Activated CD4-positive, alpha-beta T cell treated with anti-CD3 and anti-CD28 coated beads, Interleukin-2, amount 10 ng/mL, durations not matched to agents 24 days and 14 days (primary cell): ENCODE measurements at regions of chr7 and their contacts with region 1.

Region 1: GRCh38 chr7:66844552-66845378 is 76.3 kb upstream of the TMEM248 start:
- DNase-seq: peak; percentile 100
- H3K4me3 Mint-ChIP-seq: peak overlapping the region; percentile 99
- H3K27ac Mint-ChIP-seq: peak overlapping the region; percentile 97
- H3K4me1 Mint-ChIP-seq: peaks cover 22% of the 10 kb centered on the region
- H3K27me3 Mint-ChIP-seq: peaks cover 4% of the 10 kb centered on the region

Region 2: GRCh38 chr7:66413379-66414114 is 431.2 kb before region 1 on chr7:
- intact Hi-C with region 1: loop called (anchors 1 kb)
- DNase-seq: peak; percentile 94
- H3K4me3 Mint-ChIP-seq: peak overlapping the region; percentile 77
- H3K27ac Mint-ChIP-seq: peak overlapping the region; percentile 70
- H3K4me1 Mint-ChIP-seq: peaks cover 15% of the 10 kb centered on the region
- H3K27me3 Mint-ChIP-seq: no peaks in the 10 kb centered on the region

Region 3: DNA sequence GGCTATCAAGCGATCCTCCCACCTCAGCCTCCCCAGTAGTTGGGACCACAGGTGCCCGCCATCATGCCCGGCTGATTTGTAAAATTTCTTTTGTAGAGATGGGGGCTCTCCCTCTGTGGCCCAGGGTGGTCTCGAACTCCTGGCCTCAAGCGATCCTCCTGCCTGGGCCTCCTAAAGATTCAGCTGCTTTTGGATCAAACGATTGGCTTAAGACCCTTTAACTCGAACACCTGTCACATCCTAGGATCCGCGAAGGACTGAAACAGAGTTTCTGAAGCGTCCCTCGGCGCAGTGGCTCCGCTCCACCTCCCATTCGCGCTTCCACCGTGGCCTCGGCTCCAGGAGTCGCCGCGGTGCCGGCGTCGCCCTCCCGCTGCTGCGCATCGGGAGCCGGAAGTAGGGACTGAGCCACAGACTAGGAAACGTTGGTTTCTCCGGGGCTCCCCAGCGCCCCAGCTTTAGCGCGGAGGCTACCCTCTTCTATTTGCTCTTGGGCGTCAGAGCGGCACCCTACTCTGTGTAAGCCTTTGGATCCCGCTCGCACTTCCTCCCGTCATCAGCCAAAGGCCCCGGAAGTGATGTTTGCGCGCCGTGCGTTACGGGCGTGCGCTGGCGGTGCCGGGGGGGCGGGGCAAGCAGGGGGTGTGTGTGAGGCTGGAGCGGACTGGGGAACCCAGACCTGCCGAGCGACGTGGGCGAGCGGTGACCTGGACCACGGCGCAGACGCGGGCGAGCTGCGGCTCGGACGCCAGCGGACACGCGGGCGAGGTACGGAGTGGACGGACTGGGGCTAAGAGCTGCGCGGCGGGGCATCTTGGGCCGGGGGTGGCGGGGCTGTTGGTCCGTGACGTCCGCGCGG is 163.0 kb before region 1 on chr7:
- intact Hi-C with region 1: loop called (anchors 2 kb)
- DNase-seq: peak; percentile 99
- H3K4me3 Mint-ChIP-seq: peak overlapping the region; percentile 93
- H3K27ac Mint-ChIP-seq: peak overlapping the region; percentile 92
- H3K4me1 Mint-ChIP-seq: peaks cover 19% of the 10 kb centered on the region
- H3K27me3 Mint-ChIP-seq: no peaks in the 10 kb centered on the region

Region 4: GRCh38 chr7:66758950-66759628 is 85.7 kb before region 1 on chr7:
- intact Hi-C with region 1: no loop called
- DNase-seq: no peak
- H3K4me3 Mint-ChIP-seq: no peak overlapping the region
- H3K27ac Mint-ChIP-seq: peak overlapping the region; percentile 74
- H3K4me1 Mint-ChIP-seq: peaks cover 20% of the 10 kb centered on the region
- H3K27me3 Mint-ChIP-seq: no peaks in the 10 kb centered on the region

Region 5: DNA sequence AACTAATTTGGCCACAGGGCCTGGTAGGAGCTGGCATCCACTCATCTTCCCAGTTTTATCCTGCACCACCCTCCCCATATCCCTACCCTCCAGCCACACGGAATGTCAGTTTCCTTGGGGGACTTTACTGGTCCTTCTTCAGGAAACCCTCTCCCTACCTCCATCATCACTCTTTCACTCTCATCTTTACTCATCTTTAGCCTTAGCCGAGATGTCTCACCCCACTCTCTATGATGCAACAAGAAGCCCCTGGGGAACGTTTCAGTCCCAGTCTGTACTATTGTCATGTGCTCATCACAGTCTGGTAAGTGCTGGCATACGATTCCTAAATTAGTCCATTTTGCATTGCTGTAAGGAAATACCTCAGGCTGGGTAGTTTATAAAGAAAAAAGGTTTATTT is 41.4 kb after region 1 on chr7:
- intact Hi-C with region 1: loop called (anchors 5 kb)
- DNase-seq: no peak
- H3K4me3 Mint-ChIP-seq: no peak overlapping the region
- H3K27ac Mint-ChIP-seq: peak overlapping the region; percentile 42
- H3K4me1 Mint-ChIP-seq: peaks cover 14% of the 10 kb centered on the region
- H3K27me3 Mint-ChIP-seq: no peaks in the 10 kb centered on the region

Region 6: DNA sequence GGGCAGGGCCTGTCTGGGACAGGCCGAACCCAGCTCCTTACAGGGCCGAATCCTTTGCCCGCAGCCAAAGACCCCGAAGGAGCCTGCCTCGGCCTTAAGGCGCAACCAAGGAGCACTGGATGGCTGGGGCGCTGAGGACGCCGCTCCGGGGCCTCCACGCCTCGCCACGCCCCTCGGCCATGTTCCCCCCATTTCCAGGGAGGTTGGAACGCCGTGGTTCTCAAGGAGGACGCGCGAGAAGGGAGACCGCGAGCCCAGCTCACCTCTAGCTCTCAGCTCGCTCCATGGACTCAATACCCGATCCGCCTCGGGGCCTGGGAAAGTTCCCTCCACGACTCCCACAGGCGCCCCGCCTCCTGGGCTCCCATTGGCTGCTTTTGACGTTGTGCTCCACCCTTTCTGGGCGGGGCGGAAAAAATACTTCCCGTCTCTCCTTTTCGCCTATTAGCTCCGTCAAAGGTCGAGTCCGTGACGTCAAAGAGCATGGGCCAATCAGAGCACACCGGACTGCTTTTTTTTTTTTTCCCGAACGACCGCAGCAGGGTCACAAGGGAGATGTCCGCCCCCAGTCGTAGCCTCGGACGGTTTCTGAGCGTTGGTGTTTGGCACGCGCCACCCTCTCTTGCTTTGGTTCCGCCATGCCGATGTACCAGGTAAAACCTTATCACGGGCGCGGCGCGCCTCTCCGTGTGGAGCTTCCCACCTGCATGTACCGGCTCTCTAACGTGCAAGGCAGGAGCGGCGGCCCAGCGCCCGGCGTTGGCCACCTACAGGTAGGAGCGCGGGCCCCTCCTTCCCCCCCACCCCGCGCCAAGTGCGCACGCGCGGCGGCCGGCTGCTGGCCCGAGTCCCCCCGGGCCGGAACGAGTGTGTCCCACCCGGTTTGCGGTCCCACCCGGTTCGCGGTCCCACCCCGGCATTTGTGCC is 457.6 kb after region 1 on chr7:
- intact Hi-C with region 1: loop called (anchors 10 kb)
- DNase-seq: peak; percentile 99
- H3K4me3 Mint-ChIP-seq: peak overlapping the region; percentile 90
- H3K27ac Mint-ChIP-seq: peak overlapping the region; percentile 97
- H3K4me1 Mint-ChIP-seq: peaks cover 26% of the 10 kb centered on the region
- H3K27me3 Mint-ChIP-seq: peaks cover 2% of the 10 kb centered on the region